K562 (cell line): ENCODE measurements at regions of chr4 and their contacts with region 1.

Region 1: GRCh38 chr4:113394730-113395530 is 345.5 kb downstream of the ANK2 start:
- DNase-seq: peak; percentile 35 to 76 (median 56)
- ATAC-seq: peak; percentile 96
- H3K4me3 ChIP-seq: no peak overlapping the region
- H3K27ac ChIP-seq: no peak overlapping the region
- H3K4me1 ChIP-seq: no peaks in the 10 kb centered on the region
- H3K27me3 ChIP-seq: no peaks in the 10 kb centered on the region
- CTCF ChIP-seq: peak; percentile 61 to 74 (median 71)
- EP300 ChIP-seq: no peak
- POLR2A ChIP-seq: no peak
- RAD21 ChIP-seq: peak; percentile 63 to 75

Region 2: GRCh38 chr4:114077610-114078009 is 682.7 kb after region 1 on chr4:
- CTCF ChIA-PET with region 1: no interaction called
- POLR2A ChIA-PET with region 1: no interaction called
- in situ Hi-C with region 1: no loop called
- intact Hi-C with region 1: loop called (anchors 10 kb)
- DNase-seq: no peak
- ATAC-seq: no peak
- H3K4me3 ChIP-seq: no peak overlapping the region
- H3K27ac ChIP-seq: no peak overlapping the region
- H3K4me1 ChIP-seq: no peaks in the 10 kb centered on the region
- H3K27me3 ChIP-seq: no peaks in the 10 kb centered on the region
- CTCF ChIP-seq: no peak
- EP300 ChIP-seq: no peak
- POLR2A ChIP-seq: no peak
- RAD21 ChIP-seq: no peak

Region 3: DNA sequence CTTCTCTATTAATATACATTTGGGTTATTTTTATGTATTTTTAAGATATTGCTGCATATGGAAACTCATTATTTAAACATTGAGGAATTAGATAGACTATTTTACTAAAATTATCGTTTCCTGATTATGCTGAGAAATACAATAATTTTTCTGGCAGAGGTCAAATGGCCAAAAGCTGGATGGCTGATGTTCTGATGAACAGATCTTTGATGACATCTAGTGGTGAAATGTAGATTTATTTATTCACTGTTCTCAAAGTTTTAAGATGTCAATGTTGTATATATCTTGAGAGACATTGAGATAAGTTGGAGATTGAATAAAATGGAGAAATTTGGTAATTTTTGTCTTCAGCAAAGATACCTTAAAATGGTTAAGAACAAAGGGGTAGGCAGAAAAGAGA is 1299.8 kb after region 1 on chr4:
- CTCF ChIA-PET with region 1: no interaction called
- POLR2A ChIA-PET with region 1: no interaction called
- in situ Hi-C with region 1: loop called (anchors 10 kb)
- intact Hi-C with region 1: loop called (anchors 2 kb)
- DNase-seq: peak; percentile 5 to 37 (median 16)
- ATAC-seq: no peak
- H3K4me3 ChIP-seq: no peak overlapping the region
- H3K27ac ChIP-seq: no peak overlapping the region
- H3K4me1 ChIP-seq: no peaks in the 10 kb centered on the region
- H3K27me3 ChIP-seq: no peaks in the 10 kb centered on the region
- CTCF ChIP-seq: peak in 1 of 3 experiments; percentile 56; a peak in 2 of 6 replicates
- EP300 ChIP-seq: no peak
- POLR2A ChIP-seq: no peak
- RAD21 ChIP-seq: peak; percentile 63 to 68

Region 4: DNA sequence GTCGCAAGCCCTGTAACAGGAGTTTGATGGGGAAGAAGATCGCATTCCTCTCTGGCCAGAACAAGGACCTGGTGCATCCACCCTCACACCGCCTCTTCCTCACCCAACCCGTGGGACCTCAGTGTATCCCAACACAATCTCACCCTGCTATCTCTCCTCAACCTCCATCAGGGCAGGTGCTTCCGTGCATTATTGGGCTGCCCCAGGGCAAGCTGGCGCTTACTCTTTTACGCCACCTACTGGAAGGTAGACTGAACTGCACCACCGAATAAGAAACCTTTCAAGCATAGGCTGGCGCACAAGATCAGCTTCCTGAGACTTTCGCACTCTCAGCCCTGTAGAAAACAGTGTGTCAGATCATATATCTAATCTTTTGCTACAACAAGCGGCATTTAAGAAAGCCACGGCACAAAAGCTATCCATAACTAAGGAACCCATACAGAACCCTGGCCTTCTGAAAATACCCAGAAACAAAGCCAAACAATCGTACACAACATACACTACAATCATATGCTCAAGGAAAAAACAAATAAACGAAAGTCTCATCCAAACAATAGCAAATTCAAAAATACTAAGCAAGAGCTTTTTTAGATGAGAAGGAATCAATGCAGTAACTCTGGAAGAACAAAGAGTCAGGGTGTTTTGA is 1413.0 kb after region 1 on chr4:
- CTCF ChIA-PET with region 1: no interaction called
- POLR2A ChIA-PET with region 1: no interaction called
- in situ Hi-C with region 1: no loop called
- intact Hi-C with region 1: loop called (anchors 5 kb)
- DNase-seq: peak; percentile 41 to 62 (median 48)
- ATAC-seq: peak; percentile 87
- H3K4me3 ChIP-seq: no peak overlapping the region
- H3K27ac ChIP-seq: no peak overlapping the region
- H3K4me1 ChIP-seq: no peaks in the 10 kb centered on the region
- H3K27me3 ChIP-seq: no peaks in the 10 kb centered on the region
- CTCF ChIP-seq: peak; percentile 58 to 73 (median 61)
- EP300 ChIP-seq: no peak
- POLR2A ChIP-seq: no peak
- RAD21 ChIP-seq: peak in 1 of 2 experiments; percentile 39; a peak in 1 of 4 replicates